ENCODE measurements at regions of chr14 and their contacts with region 1.

Region 1: DNA sequence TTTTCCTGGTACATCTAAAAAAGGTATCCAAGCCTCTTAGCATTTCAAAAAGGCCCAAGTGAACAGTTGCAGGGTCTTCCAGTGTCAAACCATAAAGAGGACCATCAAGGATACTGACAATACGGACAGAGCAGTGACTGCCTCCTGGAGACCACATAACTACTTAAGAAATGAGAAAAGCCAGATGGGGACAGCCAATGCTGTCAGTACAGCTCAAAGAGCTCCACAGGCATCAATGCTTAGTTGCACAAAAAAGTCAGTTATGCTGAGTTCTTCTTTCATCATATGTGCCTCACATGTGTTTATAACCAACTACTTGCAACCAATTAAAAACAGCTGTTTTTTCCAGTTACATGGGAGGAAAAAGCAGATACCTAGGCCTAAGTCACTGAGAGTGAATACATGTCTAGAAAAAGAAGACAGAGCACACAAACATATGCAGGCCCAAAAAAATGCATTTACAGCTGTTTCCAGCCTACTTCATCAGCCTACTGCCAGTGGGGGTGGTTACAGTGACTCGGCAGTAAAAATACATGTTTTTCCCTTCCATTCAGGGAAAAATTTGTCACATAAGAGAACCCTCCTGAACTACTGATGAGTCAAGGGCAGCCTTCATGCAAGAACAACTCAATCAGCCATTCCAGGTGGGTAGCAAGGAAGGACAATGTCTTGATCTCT is 84.0 kb downstream of the DCAF5 start:
- DNase-seq: peak; percentile 39
- ATAC-seq: peak; percentile 51
- H3K4me3 ChIP-seq: no peak overlapping the region
- H3K27ac ChIP-seq: peak overlapping the region; percentile 10
- H3K4me1 ChIP-seq: peaks cover 5% of the 10 kb centered on the region; the same call in 1 of the 2 replicates
- H3K27me3 ChIP-seq: no peaks in the 10 kb centered on the region
- CTCF ChIP-seq: no peak

Region 2: GRCh38 chr14:69214393-69214792 is 145.5 kb after region 1 on chr14:
- CTCF ChIA-PET with region 1: no interaction called
- POLR2A ChIA-PET with region 1: interaction called, 15 read pairs
- intact Hi-C with region 1: no loop called
- DNase-seq: peak; percentile 31
- ATAC-seq: peak; percentile 100
- H3K4me3 ChIP-seq: no peak overlapping the region
- H3K27ac ChIP-seq: 0 out of 2 replicates have a peak overlapping the region, but pooled peaks have one; percentile 3
- H3K4me1 ChIP-seq: peaks cover 8% of the 10 kb centered on the region; the same call in 1 of the 2 replicates
- H3K27me3 ChIP-seq: no peaks in the 10 kb centered on the region
- CTCF ChIP-seq: no peak

Measured in PC-3 (cell line).